Caco-2 (cell line): ENCODE measurements at regions of chr16 and their contacts with region 1.

Region 1: GRCh38 chr16:79751471-79752184 is 151.1 kb upstream of the MAF start:
- DNase-seq: no peak
- H3K4me3 ChIP-seq: no peak overlapping the region
- H3K4me3 Mint-ChIP-seq: no peak overlapping the region
- H3K27ac Mint-ChIP-seq: no peak overlapping the region
- H3K4me1 ChIP-seq: peaks cover 38% of the 10 kb centered on the region
- H3K4me1 Mint-ChIP-seq: peaks cover 34% of the 10 kb centered on the region
- H3K27me3 ChIP-seq: no peaks in the 10 kb centered on the region
- H3K27me3 Mint-ChIP-seq: no peaks in the 10 kb centered on the region
- CTCF ChIP-seq: no peak

Region 2: DNA sequence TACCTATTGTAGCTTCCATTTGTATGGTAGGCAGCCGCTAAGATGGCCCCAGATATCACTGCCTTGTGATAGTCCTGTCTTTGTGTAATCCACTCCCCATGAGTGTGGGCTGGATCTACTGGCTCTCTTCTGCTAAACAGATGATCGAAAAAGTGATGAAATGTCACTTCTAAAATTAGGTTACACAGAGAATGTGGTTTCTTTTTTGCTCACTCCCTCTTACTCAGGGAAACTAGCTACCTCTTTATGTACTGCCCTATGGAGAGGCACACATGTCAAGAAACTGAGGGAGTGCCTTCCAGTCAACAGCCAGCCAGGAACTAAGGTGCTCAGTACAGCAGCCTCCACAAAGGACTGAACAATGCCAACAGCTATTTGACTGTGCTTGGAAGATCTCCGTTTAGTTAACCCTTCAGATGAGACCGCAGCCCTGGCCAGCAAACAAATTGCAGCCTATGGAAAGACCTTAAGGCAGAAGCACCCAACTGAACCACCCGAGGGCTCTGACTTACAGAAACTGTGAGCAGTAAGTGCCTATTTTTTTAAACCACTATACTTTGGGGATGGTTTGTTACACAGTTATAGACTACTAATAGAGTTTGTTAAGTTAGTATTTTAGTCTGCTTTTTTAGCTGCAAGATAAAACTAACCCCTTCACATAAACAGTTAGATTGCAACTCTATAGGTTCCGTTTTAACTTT is 37.9 kb before region 1 on chr16:
- CTCF ChIA-PET with region 1: no interaction called
- POLR2A ChIA-PET with region 1: no interaction called
- intact Hi-C with region 1: loop called (anchors 2 kb)
- DNase-seq: no peak
- H3K4me3 ChIP-seq: no peak overlapping the region
- H3K4me3 Mint-ChIP-seq: no peak overlapping the region
- H3K27ac Mint-ChIP-seq: no peak overlapping the region
- H3K4me1 ChIP-seq: peaks cover 49% of the 10 kb centered on the region
- H3K4me1 Mint-ChIP-seq: peaks cover 27% of the 10 kb centered on the region
- H3K27me3 ChIP-seq: no peaks in the 10 kb centered on the region
- H3K27me3 Mint-ChIP-seq: no peaks in the 10 kb centered on the region
- CTCF ChIP-seq: no peak

Region 3: DNA sequence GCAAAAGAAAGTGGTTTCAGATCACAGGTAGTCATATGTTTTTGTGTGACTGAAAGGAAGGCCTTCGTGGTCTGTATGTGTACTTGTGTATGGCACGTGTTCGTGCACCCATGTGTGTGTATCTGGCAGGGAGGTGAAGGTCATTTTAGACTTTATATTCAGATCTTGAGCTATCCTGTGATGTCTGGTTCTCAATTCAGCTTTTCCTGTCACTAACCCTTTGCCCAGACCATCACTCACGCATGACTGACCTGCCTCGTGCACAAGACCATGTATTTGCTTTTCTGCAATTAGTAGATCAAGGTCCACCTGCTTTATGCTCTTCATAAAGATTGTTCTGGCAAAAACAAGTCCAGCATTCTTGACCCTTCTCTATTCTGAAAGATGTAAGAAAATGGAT is 11.4 kb before region 1 on chr16:
- CTCF ChIA-PET with region 1: no interaction called
- POLR2A ChIA-PET with region 1: no interaction called
- intact Hi-C with region 1: loop called (anchors 1 kb)
- DNase-seq: peak; percentile 53 to 73
- H3K4me3 ChIP-seq: no peak overlapping the region
- H3K4me3 Mint-ChIP-seq: peak overlapping the region; percentile 5
- H3K27ac Mint-ChIP-seq: peak overlapping the region; percentile 85
- H3K4me1 ChIP-seq: peaks cover 24% of the 10 kb centered on the region
- H3K4me1 Mint-ChIP-seq: peaks cover 9% of the 10 kb centered on the region
- H3K27me3 ChIP-seq: no peaks in the 10 kb centered on the region
- H3K27me3 Mint-ChIP-seq: no peaks in the 10 kb centered on the region
- CTCF ChIP-seq: no peak

Region 4: DNA sequence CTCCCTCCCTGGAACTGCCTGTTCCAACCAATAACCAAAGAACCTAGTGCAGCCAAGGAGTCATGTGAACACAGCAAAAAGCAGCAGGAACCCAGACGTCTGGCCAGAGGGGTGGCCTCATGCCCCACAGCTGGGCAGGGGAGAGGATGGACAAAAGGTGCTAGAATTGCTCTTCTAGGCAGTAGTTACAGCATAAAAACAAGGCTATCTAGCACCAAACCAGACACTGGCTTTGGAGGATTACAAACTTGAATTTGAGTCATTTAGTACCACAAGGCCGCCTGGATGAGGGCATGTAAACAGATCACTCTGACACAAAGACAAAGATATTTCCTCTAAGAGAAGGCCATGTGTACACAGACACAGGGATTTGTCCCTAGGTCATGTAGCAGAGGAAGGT is 272.2 kb after region 1 on chr16:
- CTCF ChIA-PET with region 1: no interaction called
- POLR2A ChIA-PET with region 1: no interaction called
- intact Hi-C with region 1: no loop called
- DNase-seq: peak in 1 of 2 experiments; percentile 11
- H3K4me3 ChIP-seq: no peak overlapping the region
- H3K4me3 Mint-ChIP-seq: no peak overlapping the region
- H3K27ac Mint-ChIP-seq: no peak overlapping the region
- H3K4me1 ChIP-seq: peaks cover 17% of the 10 kb centered on the region
- H3K4me1 Mint-ChIP-seq: peaks cover 27% of the 10 kb centered on the region
- H3K27me3 ChIP-seq: no peaks in the 10 kb centered on the region
- H3K27me3 Mint-ChIP-seq: no peaks in the 10 kb centered on the region
- CTCF ChIP-seq: no peak

Region 5: DNA sequence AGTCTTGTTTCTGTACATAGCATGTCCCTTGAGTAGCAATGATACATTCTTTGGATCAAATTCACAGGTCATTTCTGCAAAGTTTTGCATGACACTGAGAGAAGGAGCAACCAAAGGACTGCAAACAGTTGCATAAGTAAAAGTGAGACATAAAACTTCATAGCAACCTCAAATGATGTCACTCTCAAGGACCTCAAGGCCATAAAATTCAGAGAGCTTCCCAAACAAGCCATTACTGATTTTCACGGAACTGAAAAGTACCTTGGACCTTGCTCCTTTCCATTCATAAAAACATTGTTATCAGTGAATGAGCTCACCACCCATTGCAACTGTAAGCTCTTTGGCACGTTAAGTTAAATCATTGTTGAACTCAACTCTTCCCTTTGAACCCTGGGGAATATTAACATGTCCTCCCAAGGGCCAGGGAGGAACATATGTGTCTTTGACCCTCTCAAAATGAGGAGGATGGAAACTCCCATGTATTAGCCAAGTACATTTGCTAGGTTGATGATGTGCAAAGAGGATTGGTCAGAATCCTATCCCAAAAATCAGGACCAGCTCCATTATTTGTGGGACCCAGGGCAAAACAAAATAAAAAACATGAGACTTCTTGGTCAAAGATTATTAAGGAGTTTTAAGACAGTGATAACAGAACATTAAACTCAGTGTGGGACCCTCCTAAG is 514.1 kb after region 1 on chr16:
- CTCF ChIA-PET with region 1: no interaction called
- POLR2A ChIA-PET with region 1: no interaction called
- intact Hi-C with region 1: loop called (anchors 10 kb)
- DNase-seq: peak; percentile 69 to 84
- H3K4me3 ChIP-seq: no peak overlapping the region
- H3K4me3 Mint-ChIP-seq: peak overlapping the region; percentile 71
- H3K27ac Mint-ChIP-seq: peak overlapping the region; percentile 96
- H3K4me1 ChIP-seq: peaks cover 47% of the 10 kb centered on the region
- H3K4me1 Mint-ChIP-seq: peaks cover 45% of the 10 kb centered on the region
- H3K27me3 ChIP-seq: no peaks in the 10 kb centered on the region
- H3K27me3 Mint-ChIP-seq: no peaks in the 10 kb centered on the region
- CTCF ChIP-seq: no peak